PC-9 (cell line): ENCODE measurements at regions of chr5 and their contacts with region 1.

Region 1: GRCh38 chr5:74903165-74903787 is 37.1 kb upstream of the FAM169A start:
- DNase-seq: peak; percentile 67 to 78
- H3K4me3 ChIP-seq: no peak overlapping the region
- H3K27ac ChIP-seq: no peak overlapping the region
- H3K4me1 ChIP-seq: peaks cover 8% of the 10 kb centered on the region; the same call in 1 of the 2 replicates
- H3K27me3 ChIP-seq: no peaks in the 10 kb centered on the region
- CTCF ChIP-seq: peak; percentile 75

Region 2: GRCh38 chr5:74394916-74395781 is 508.1 kb before region 1 on chr5:
- CTCF ChIA-PET with region 1: no interaction called
- POLR2A ChIA-PET with region 1: no interaction called
- intact Hi-C with region 1: no loop called
- DNase-seq: peak; percentile 91 to 99
- H3K4me3 ChIP-seq: no peak overlapping the region; the same call in 1 of the 2 replicates
- H3K27ac ChIP-seq: peak overlapping the region; percentile 82
- H3K4me1 ChIP-seq: peaks cover 42% of the 10 kb centered on the region
- H3K27me3 ChIP-seq: no peaks in the 10 kb centered on the region
- CTCF ChIP-seq: peak; percentile 61

Region 3: DNA sequence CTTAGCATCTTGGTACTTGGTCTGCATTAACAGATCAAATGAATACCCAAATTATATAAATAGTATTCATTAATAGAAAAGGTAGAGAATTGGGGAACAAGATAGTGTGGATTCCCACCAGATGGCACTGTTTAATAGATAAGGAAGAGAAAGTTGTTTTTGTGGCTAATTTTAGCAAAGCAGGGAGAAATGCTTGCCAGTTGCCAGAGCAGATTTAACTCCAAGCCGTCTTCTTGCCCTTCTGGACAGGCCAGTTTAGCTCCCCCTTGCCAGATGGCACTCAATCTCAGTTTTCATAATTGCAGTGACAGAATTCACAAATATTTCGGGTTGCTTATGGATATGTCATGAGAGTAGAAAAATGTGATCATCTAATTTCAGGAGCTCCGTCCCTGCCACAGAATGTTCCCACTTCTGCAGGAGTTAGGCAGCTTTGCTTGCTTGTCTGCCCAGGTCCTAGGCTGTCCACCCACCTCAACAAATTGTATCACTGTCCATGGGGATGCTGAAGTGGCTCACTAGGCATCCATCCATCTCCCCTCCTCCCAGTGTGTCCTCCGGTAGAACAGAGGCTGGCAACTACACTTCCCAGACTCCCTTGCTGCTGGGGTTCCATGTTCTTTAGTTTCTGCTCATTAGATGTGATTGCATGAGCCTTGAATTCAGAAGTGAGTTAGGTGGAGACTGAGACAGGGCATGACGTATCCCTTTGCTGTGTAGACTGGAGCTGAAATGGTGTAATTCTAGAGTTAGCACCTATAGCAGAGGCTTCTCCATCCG is 230.1 kb before region 1 on chr5:
- CTCF ChIA-PET with region 1: no interaction called
- POLR2A ChIA-PET with region 1: no interaction called
- intact Hi-C with region 1: loop called (anchors 5 kb)
- DNase-seq: peak; percentile 29 to 66
- H3K4me3 ChIP-seq: no peak overlapping the region
- H3K27ac ChIP-seq: no peak overlapping the region
- H3K4me1 ChIP-seq: peaks cover 9% of the 10 kb centered on the region; the same call in 1 of the 2 replicates
- H3K27me3 ChIP-seq: no peaks in the 10 kb centered on the region
- CTCF ChIP-seq: peak; percentile 63

Region 4: DNA sequence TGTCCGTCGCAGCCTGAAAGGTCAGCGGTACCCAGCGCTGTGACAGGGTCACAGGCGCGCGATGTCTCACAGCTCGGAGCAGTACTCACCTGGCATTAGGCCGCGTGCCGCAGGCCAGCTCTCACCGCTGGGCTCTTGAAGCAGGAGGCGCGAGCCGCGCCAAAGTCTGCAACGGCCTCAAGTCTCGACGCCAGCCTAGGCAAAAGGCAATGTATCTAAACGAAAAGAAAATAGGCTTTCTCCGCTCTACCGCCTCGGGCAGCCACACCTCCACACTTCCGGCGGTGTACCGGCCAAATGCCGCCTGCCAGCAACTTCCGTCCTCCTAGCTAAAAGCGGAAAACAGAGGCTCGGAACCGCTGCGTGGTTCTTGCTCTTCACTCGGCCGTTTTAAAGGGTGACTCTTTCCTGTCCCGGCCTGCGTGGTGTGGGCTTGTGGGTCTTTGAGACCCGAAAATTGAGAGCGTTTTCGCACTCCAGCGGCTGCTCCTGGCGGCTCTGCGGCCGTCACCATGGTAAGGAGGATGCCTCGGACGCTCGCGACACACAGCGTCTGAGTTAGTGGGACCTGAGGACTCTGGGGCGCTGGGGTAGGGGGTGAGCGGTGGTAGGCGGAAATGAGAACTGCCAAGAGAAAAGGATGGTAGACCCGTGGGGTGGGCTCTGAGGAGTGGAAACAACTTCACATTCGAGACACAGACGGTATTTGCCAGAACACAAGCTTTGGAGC is 136.3 kb before region 1 on chr5 and contains the starts of genes GFM2 and NSA2:
- CTCF ChIA-PET with region 1: no interaction called
- POLR2A ChIA-PET with region 1: no interaction called
- intact Hi-C with region 1: loop called (anchors 2 kb)
- DNase-seq: peak; percentile 83 to 88
- H3K4me3 ChIP-seq: peak within 1 kb of the TSS; percentile 83
- H3K27ac ChIP-seq: peak within 1 kb of the TSS; percentile 58
- H3K4me1 ChIP-seq: peaks cover 44% of the 10 kb centered on the region
- H3K27me3 ChIP-seq: no peaks in the 10 kb centered on the region
- CTCF ChIP-seq: no peak; the same call in 1 of the 2 replicates
- total RNA-seq, gene GFM2: 38.5 and 39.8 TPM in 2 replicates
- total RNA-seq, gene NSA2: 47.3 and 87.1 TPM in 2 replicates